Caco-2 (cell line): ENCODE measurements at regions of chr4 and their contacts with region 1.

Region 1: GRCh38 chr4:145216535-145216934 is 36.1 kb upstream of the OTUD4 start:
- DNase-seq: no peak
- H3K4me3 ChIP-seq: no peak overlapping the region
- H3K4me3 Mint-ChIP-seq: no peak overlapping the region
- H3K27ac Mint-ChIP-seq: no peak overlapping the region
- H3K4me1 ChIP-seq: no peaks in the 10 kb centered on the region
- H3K4me1 Mint-ChIP-seq: no peaks in the 10 kb centered on the region
- H3K27me3 ChIP-seq: no peaks in the 10 kb centered on the region; the same call in 1 of the 2 replicates
- H3K27me3 Mint-ChIP-seq: peaks cover 2% of the 10 kb centered on the region
- CTCF ChIP-seq: peak in 1 of 2 experiments; percentile 32

Region 2: DNA sequence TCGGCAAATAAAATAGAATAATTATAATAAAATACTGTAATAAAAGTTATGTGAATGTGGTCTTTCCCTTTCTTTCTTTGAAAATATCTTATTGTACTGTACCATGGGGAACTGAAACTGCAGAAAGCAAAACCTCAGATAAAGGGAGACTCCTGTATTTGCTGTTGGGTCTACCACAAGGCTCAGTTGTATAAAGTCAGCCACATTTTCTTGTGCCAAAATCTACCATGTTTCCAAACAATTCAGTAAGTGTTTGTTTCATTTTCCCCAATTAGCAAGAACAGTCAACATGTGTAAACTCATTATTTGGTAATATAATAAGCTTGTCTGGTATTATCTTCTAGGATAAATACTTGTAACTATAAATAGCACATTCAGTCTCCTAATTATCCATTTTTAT is 21.4 kb before region 1 on chr4:
- CTCF ChIA-PET with region 1: no interaction called
- POLR2A ChIA-PET with region 1: no interaction called
- intact Hi-C with region 1: loop called (anchors 2 kb)
- DNase-seq: no peak
- H3K4me3 ChIP-seq: no peak overlapping the region
- H3K4me3 Mint-ChIP-seq: no peak overlapping the region
- H3K27ac Mint-ChIP-seq: peak overlapping the region; percentile 42
- H3K4me1 ChIP-seq: peaks cover 9% of the 10 kb centered on the region
- H3K4me1 Mint-ChIP-seq: no peaks in the 10 kb centered on the region
- H3K27me3 ChIP-seq: no peaks in the 10 kb centered on the region
- H3K27me3 Mint-ChIP-seq: no peaks in the 10 kb centered on the region
- CTCF ChIP-seq: no peak